ENCODE measurements at regions of chr4 and their contacts with region 1.

Region 1: GRCh38 chr4:138939954-138940353 is 75.6 kb upstream of the NOCT start:
- DNase-seq: no peak
- H3K4me3 ChIP-seq: no peak overlapping the region
- H3K27ac ChIP-seq: no peak overlapping the region
- H3K4me1 ChIP-seq: peaks cover 3% of the 10 kb centered on the region
- H3K27me3 ChIP-seq: no peaks in the 10 kb centered on the region
- CTCF ChIP-seq: no peak

Region 2: DNA sequence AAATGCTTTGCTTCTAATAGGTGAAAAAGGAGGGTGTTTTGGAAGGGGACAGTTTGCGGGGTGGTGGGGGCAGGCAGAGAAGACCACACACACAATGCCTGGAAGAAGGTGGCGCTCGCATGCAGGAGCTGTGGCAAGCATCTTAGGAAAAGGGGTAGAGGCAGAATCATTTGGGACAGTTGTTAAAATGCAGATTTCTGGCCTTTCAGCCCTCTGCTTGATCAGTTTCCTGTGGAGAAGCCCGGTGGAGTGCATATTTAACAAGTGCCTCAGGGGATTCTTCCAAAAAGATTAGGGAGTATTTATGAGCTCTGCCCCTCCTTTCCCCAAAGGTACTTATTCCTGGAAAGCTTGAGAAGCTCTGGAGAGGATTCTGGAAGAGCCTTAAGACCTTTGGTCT is 80.4 kb after region 1 on chr4:
- dilution Hi-C with region 1: loop called (anchors 5 kb)
- DNase-seq: no peak
- H3K4me3 ChIP-seq: no peak overlapping the region
- H3K27ac ChIP-seq: no peak overlapping the region
- H3K4me1 ChIP-seq: peaks cover 22% of the 10 kb centered on the region
- H3K27me3 ChIP-seq: no peaks in the 10 kb centered on the region
- CTCF ChIP-seq: no peak